Activated CD4-positive, alpha-beta memory T cell treated with anti-CD3 and anti-CD28 coated beads, Interleukin-2, amount 10 ng/mL, durations not matched to agents 7 days and 5 days (primary cell): ENCODE measurements at regions of chr10 and their contacts with region 1.

Region 1: GRCh38 chr10:6920072-6921019 is 340.3 kb upstream of the PRKCQ start:
- DNase-seq: peak; percentile 84
- H3K4me3 Mint-ChIP-seq: no peak overlapping the region
- H3K27ac Mint-ChIP-seq: no peak overlapping the region
- H3K4me1 Mint-ChIP-seq: peaks cover 30% of the 10 kb centered on the region
- H3K27me3 Mint-ChIP-seq: peaks cover 14% of the 10 kb centered on the region

Region 2: DNA sequence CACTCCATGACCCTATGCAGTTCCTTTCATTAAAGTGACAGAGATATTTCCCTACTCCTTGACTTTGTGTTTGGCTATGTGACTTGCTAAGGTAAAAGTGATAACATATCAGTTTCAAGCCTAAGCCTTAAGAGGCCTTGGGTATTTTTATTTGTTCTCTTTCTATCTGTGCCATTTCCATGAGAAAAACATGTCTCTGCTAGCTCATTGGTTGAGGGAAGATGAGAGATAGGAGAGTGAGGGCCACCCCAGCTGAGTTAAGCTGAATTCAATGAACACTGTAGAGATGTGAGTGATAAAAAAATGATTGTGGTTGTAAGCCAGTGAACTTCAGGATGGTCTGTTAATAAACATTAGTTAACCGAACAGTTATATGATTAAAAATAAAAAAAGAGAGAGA is 1222.3 kb before region 1 on chr10:
- CTCF ChIA-PET with region 1: no interaction called
- POLR2A ChIA-PET with region 1: no interaction called
- DNase-seq: no peak
- H3K4me3 Mint-ChIP-seq: no peak overlapping the region
- H3K27ac Mint-ChIP-seq: no peak overlapping the region
- H3K4me1 Mint-ChIP-seq: peaks cover 13% of the 10 kb centered on the region
- H3K27me3 Mint-ChIP-seq: no peaks in the 10 kb centered on the region

Region 3: DNA sequence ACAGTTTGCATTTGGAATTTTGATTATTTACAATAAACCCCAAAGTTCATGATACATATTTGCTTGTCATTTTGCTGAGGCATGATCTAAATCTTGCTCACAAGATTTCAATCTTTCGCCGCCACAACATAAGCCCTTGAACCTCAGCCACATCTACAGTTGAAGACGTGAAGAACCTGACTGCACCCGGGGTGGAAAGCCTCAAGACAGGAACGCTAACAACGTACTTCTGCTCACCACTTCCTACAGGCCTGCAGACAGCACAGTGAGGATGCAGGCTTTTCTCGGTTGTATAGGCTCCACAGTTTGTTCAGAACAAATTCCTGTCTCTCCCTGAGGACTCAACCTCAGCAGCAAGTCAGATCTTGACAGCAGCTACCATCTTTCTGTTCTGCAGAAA is 53.6 kb after region 1 on chr10:
- CTCF ChIA-PET with region 1: interaction called, 10 read pairs
- POLR2A ChIA-PET with region 1: no interaction called
- DNase-seq: peak; percentile 62
- H3K4me3 Mint-ChIP-seq: no peak overlapping the region
- H3K27ac Mint-ChIP-seq: peak overlapping the region; percentile 72
- H3K4me1 Mint-ChIP-seq: peaks cover 20% of the 10 kb centered on the region
- H3K27me3 Mint-ChIP-seq: peaks cover 17% of the 10 kb centered on the region

Region 4: DNA sequence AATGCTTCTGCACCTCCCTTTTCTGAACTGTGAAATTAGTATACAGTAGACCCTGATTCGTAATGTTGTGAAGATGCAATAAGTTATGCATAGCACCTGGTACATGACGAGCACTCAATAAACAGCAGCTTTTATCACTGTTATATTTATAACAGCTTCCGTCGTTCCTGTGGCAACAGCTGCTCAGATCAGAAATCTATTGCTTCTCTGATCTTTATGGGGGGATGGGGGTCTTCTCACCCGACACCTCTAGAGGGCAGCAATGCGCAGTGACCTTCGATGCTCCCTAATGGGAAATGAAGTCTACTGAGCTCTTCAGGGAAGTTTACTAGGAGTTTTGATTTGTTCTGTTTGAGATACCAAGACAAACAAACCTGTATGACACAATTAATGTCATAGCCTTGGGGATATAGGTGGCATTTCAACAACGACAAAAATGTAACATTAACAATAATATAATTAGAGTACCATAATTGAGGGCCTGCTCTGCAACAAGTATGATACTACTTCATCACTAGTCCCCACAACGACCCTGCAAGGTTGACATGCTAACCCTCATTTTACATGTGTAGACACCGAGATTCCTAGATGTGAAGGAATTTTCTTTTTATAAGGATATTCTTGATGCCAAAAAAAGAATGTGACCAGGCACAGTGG is 200.9 kb after region 1 on chr10:
- CTCF ChIA-PET with region 1: interaction called, 19 read pairs
- POLR2A ChIA-PET with region 1: no interaction called
- DNase-seq: peak; percentile 66
- H3K4me3 Mint-ChIP-seq: no peak overlapping the region
- H3K27ac Mint-ChIP-seq: no peak overlapping the region
- H3K4me1 Mint-ChIP-seq: peaks cover 3% of the 10 kb centered on the region
- H3K27me3 Mint-ChIP-seq: peaks cover 36% of the 10 kb centered on the region

Region 5: GRCh38 chr10:7417103-7417623 is 496.8 kb after region 1 on chr10:
- CTCF ChIA-PET with region 1: interaction called, 65 read pairs
- POLR2A ChIA-PET with region 1: no interaction called
- DNase-seq: no peak
- H3K4me3 Mint-ChIP-seq: no peak overlapping the region
- H3K27ac Mint-ChIP-seq: peak overlapping the region; percentile 16
- H3K4me1 Mint-ChIP-seq: peaks cover 25% of the 10 kb centered on the region
- H3K27me3 Mint-ChIP-seq: peaks cover 44% of the 10 kb centered on the region